ENCODE measurements at regions of chr14 and their contacts with region 1.

Region 1: GRCh38 chr14:20454516-20455354 is at the starts of genes APEX1 and OSGEP:
- DNase-seq: peak; percentile 99
- H3K4me3 Mint-ChIP-seq: peak within 1 kb of the TSS; percentile 59
- H3K27ac Mint-ChIP-seq: no peak within 1 kb of the TSS
- H3K4me1 Mint-ChIP-seq: peaks cover 20% of the 10 kb centered on the region
- H3K27me3 Mint-ChIP-seq: no peaks in the 10 kb centered on the region
- total RNA-seq, gene APEX1: 239 and 242 TPM in 2 replicates
- total RNA-seq, gene OSGEP: 69.8 and 76.9 TPM in 2 replicates

Region 2: DNA sequence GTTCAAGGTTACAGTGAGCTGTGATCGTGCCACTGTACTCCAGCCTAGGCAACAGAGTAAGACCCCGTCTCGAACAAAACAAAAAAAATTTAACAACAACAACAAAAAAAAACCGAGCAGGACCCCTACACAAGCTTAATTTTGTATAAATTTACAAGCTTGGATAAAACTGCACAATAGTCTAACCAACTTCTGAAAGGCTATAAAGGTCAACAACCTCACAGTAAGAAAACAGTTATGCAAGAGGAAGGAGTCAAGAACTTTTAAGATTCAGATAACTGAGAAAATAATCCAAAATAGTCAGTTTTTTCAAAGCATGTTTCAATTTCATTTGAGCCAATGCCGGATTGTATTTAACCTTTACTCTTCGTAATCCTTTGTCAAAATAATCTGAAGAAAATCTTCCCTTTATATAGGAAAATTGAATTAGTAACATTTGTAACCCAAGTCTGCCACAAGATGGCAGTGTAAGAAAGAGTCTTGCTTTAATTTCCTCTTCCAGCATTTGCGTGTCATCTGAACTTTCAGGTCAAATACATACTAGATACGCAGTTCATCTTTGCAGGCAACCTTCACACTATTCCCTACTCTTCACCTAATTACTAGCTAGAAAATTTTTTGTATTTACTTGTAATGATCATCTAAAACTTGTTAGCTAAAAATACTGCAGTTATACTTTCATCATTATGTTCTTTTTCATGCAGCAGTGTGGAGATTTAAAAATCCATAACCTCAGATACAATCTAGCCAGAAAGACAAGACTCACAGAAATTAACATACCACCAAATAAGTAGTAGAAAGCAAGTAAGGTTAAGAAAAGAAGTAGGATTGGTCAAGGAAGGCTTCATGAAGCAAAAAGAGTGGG is 127.5 kb before region 1 on chr14:
- intact Hi-C with region 1: loop called (anchors 1 kb)
- DNase-seq: peak; percentile 83
- H3K4me3 Mint-ChIP-seq: peak overlapping the region; percentile 56
- H3K27ac Mint-ChIP-seq: peak overlapping the region; percentile 31
- H3K4me1 Mint-ChIP-seq: peaks cover 31% of the 10 kb centered on the region
- H3K27me3 Mint-ChIP-seq: no peaks in the 10 kb centered on the region

Region 3: GRCh38 chr14:20469242-20469889 is 14.6 kb after region 1 on chr14 and contains the start of gene PNP:
- intact Hi-C with region 1: loop called (anchors 1 kb)
- DNase-seq: peak; percentile 96
- H3K4me3 Mint-ChIP-seq: peak within 1 kb of the TSS; percentile 95
- H3K27ac Mint-ChIP-seq: peak within 1 kb of the TSS; percentile 100
- H3K4me1 Mint-ChIP-seq: peaks cover 36% of the 10 kb centered on the region
- H3K27me3 Mint-ChIP-seq: peaks cover 2% of the 10 kb centered on the region
- total RNA-seq, gene PNP: 155 and 158 TPM in 2 replicates